Activated naive CD4-positive, alpha-beta T cell treated with anti-CD3 and anti-CD28 coated beads for 36 hours (primary cell): ENCODE measurements at regions of chr11 and their contacts with region 1.

Region 1: GRCh38 chr11:66510271-66510989 is at the start of gene BBS1:
- DNase-seq: peak; percentile 85
- H3K4me3 Mint-ChIP-seq: peak within 1 kb of the TSS; percentile 89
- H3K27ac Mint-ChIP-seq: no peak within 1 kb of the TSS
- H3K4me1 Mint-ChIP-seq: peaks cover 15% of the 10 kb centered on the region
- H3K27me3 Mint-ChIP-seq: no peaks in the 10 kb centered on the region
- total RNA-seq, gene BBS1: 10.1 to 10.9 TPM

Region 2: DNA sequence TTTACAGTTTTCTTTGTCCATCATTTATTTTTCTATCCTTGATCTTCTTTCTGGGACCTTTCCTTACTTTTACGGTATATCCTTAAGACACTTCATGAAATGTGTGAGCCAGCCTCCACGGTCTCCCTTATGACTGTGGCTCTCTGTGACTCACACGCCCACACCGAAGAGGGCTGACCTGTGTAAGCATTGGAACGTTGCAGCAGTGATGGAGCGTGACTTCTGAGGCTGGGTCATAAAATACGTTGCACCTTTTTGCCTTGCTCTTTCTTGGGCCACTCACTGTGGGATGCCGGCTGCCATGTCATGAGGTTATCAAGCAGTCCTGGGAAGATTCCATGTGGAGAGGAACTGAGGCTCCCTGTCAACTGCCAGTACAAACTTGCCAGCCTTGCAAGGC is 338.3 kb before region 1 on chr11:
- CTCF ChIA-PET with region 1: no interaction called
- intact Hi-C with region 1: no loop called
- DNase-seq: peak; percentile 13
- H3K4me3 Mint-ChIP-seq: no peak overlapping the region
- H3K27ac Mint-ChIP-seq: no peak overlapping the region
- H3K4me1 Mint-ChIP-seq: peaks cover 34% of the 10 kb centered on the region
- H3K27me3 Mint-ChIP-seq: no peaks in the 10 kb centered on the region

Region 3: DNA sequence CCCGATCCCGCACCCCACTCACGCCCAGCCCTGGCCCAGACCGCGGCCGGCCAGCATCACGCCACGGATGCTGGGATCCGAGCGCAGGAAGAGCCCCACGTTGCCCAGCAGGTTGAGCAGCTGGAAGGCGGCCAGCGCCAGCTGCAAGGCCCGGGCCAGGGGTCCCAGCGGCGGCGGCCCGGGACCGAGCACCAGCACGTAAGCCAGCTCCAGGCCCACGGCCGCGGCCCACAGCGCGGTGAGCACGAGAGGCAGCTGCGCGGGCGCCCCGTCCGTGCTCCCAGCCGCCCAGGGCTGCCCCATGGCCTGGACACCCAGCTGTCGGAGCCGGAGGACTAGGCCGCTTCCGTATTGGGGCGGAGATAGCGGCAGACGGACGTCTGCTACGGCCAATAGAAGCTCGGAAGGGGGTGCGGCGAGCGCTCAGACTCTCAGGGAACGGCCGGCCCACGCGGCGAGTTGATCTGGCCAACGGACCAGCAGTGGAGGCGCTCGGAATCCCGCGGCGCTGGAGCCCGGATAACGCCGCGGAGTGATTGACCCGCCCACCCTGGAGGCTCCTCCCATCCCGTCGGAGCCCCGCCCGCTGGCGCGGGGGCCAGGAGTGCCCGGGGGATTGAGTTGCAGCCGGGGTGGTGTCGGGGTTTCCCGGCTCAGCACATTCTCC is 35.4 kb after region 1 on chr11 and contains the start of gene ZDHHC24:
- CTCF ChIA-PET with region 1: no interaction called
- intact Hi-C with region 1: loop called (anchors 2 kb)
- DNase-seq: peak; percentile 91
- H3K4me3 Mint-ChIP-seq: peak within 1 kb of the TSS; percentile 75
- H3K27ac Mint-ChIP-seq: peak within 1 kb of the TSS; percentile 30
- H3K4me1 Mint-ChIP-seq: peaks cover 18% of the 10 kb centered on the region
- H3K27me3 Mint-ChIP-seq: no peaks in the 10 kb centered on the region
- total RNA-seq, gene ZDHHC24: 11.5 to 13.4 TPM